Upper lobe of right lung (tissue), 1 donor: ENCODE measurements at regions of chr2 and their contacts with region 1.

Region 1: GRCh38 chr2:237744613-237745249 is 53.8 kb upstream of the RBM44 start:
- DNase-seq: peak; percentile 85
- ATAC-seq: peak; percentile 93
- H3K4me3 ChIP-seq: no peak overlapping the region
- H3K27ac ChIP-seq: no peak overlapping the region
- H3K4me1 ChIP-seq: peaks cover 37% of the 10 kb centered on the region
- H3K27me3 ChIP-seq: no peaks in the 10 kb centered on the region
- CTCF ChIP-seq: peak; percentile 98

Region 2: DNA sequence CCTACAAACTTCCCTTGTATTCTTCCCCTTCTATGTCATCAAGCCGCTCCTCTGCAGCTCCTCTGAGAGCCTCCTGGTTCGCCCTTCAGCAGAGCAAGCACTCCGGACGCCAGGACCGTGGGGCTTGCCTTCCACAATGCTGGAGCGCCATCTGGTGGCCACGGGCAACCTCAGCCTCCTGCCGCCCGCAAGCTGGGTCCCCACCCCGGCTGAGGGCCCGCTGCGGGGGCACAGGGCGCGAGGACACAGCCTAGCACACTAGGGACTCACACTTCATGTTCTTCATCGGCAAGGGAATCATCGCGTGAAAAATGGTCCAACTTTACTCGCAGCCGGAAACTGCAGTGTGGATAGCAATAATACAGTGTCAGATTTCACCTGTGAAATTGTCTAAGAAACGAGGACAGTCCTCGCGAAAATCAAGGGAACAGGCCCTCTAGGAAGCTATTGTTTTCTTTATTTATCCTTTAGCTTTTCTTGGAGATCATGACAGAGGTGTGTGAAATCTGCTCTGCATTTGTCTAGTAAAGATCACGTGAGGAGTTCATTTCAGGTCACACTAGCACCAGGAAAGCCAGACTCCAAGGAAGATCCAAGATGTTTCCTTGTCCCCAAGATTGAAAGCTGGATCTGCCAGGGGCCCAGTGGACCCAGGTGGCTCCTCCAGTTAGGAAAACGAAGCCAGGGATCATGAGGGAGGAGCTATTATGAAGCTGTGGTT is 172.6 kb before region 1 on chr2:
- intact Hi-C with region 1: loop called (anchors 5 kb)
- DNase-seq: peak; percentile 94
- ATAC-seq: peak; percentile 94
- H3K4me3 ChIP-seq: no peak overlapping the region
- H3K27ac ChIP-seq: no peak overlapping the region
- H3K4me1 ChIP-seq: peaks cover 8% of the 10 kb centered on the region
- H3K27me3 ChIP-seq: no peaks in the 10 kb centered on the region
- CTCF ChIP-seq: peak; percentile 98

Region 3: GRCh38 chr2:237674731-237675276 is 69.9 kb before region 1 on chr2:
- intact Hi-C with region 1: loop called (anchors 5 kb)
- DNase-seq: peak; percentile 94
- ATAC-seq: peak; percentile 91
- H3K4me3 ChIP-seq: peak overlapping the region; percentile 29
- H3K27ac ChIP-seq: peak overlapping the region; percentile 91
- H3K4me1 ChIP-seq: peaks cover 71% of the 10 kb centered on the region
- H3K27me3 ChIP-seq: no peaks in the 10 kb centered on the region
- CTCF ChIP-seq: no peak